SK-N-SH (cell line): ENCODE measurements at regions of chr16 and their contacts with region 1.

Region 1: DNA sequence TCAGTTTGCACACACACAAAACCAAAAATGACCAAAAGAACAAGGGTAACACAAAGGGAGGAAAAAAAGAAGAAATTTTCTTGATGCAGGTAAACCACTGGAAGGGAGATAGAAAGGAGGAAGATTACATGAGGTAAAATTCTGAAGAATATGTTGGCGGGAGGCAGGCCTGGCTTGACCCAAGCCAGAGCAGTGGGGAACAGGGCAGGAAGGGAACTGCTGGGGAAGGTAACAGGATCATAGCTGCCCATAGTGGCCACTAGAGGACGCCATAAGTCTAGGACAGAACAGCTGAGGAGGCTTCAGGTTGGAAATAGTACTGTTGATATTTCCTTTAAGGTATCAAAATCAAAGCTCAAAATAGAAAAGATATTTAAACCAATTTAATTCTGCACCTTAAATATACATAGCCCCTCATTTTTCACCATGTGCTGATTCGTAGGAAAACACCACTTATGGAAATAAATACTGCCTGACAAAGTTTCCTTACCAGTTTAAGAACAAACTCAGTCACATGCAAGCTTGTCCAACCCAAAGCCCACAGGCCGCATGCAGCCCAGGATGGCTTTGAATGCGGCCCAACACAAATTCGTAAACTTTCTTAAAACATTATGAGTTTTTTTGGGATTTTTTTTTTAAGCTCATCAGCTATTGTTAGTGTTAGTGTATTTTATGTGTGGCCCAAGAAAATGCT is 15.5 kb downstream of the VPS35 start:
- DNase-seq: peak; percentile 75
- H3K4me3 ChIP-seq: peak overlapping the region in 1 of 2 experiments; percentile 27; a peak in 1 of 4 replicates
- H3K27ac ChIP-seq: no peak overlapping the region
- H3K4me1 ChIP-seq: no peaks in the 10 kb centered on the region
- H3K27me3 ChIP-seq: no peaks in the 10 kb centered on the region
- CTCF ChIP-seq: peak; percentile 98
- EP300 ChIP-seq: no peak
- RAD21 ChIP-seq: peak; percentile 94

Region 2: GRCh38 chr16:46658925-46659324 is 14.5 kb before region 1 on chr16:
- CTCF ChIA-PET with region 1: interaction called, 24 read pairs
- POLR2A ChIA-PET with region 1: no interaction called
- DNase-seq: no peak
- H3K4me3 ChIP-seq: no peak overlapping the region
- H3K27ac ChIP-seq: no peak overlapping the region
- H3K4me1 ChIP-seq: no peaks in the 10 kb centered on the region
- H3K27me3 ChIP-seq: no peaks in the 10 kb centered on the region
- CTCF ChIP-seq: no peak
- EP300 ChIP-seq: no peak
- RAD21 ChIP-seq: no peak

Region 3: GRCh38 chr16:46689365-46690280 is 16.2 kb after region 1 on chr16 and contains the start of gene ORC6:
- CTCF ChIA-PET with region 1: interaction called, 18 read pairs
- POLR2A ChIA-PET with region 1: no interaction called
- DNase-seq: peak; percentile 96
- H3K4me3 ChIP-seq: peak within 1 kb of the TSS; percentile 69 to 83
- H3K27ac ChIP-seq: peak within 1 kb of the TSS; percentile 93 to 99
- H3K4me1 ChIP-seq: peaks cover 18% of the 10 kb centered on the region in 2 experiments
- H3K27me3 ChIP-seq: no peaks in the 10 kb centered on the region
- CTCF ChIP-seq: peak; percentile 63
- EP300 ChIP-seq: no peak
- RAD21 ChIP-seq: peak; percentile 59
- polyA plus RNA-seq, gene ORC6: 17.4 and 20.2 TPM in 2 replicates

Region 4: GRCh38 chr16:46737621-46738214 is 64.3 kb after region 1 on chr16:
- CTCF ChIA-PET with region 1: no interaction called
- POLR2A ChIA-PET with region 1: no interaction called
- DNase-seq: no peak
- H3K4me3 ChIP-seq: no peak overlapping the region
- H3K27ac ChIP-seq: no peak overlapping the region
- H3K4me1 ChIP-seq: peaks cover 0 to 2% of the 10 kb centered on the region in 2 experiments; a peak in 1 of 4 replicates
- H3K27me3 ChIP-seq: no peaks in the 10 kb centered on the region
- CTCF ChIP-seq: no peak
- EP300 ChIP-seq: no peak
- RAD21 ChIP-seq: no peak

Region 5: GRCh38 chr16:46801428-46802049 is 128.1 kb after region 1 on chr16:
- CTCF ChIA-PET with region 1: interaction called, 47 read pairs
- POLR2A ChIA-PET with region 1: no interaction called
- DNase-seq: peak; percentile 44
- H3K4me3 ChIP-seq: no peak overlapping the region; a peak in 1 of 4 replicates
- H3K27ac ChIP-seq: no peak overlapping the region
- H3K4me1 ChIP-seq: no peaks in the 10 kb centered on the region; a peak in 1 of 4 replicates
- H3K27me3 ChIP-seq: no peaks in the 10 kb centered on the region
- CTCF ChIP-seq: peak; percentile 68
- EP300 ChIP-seq: no peak
- RAD21 ChIP-seq: peak; percentile 62

Region 6: GRCh38 chr16:46808997-46809396 is 135.5 kb after region 1 on chr16:
- CTCF ChIA-PET with region 1: interaction called, 30 read pairs
- POLR2A ChIA-PET with region 1: no interaction called
- DNase-seq: no peak
- H3K4me3 ChIP-seq: no peak overlapping the region
- H3K27ac ChIP-seq: no peak overlapping the region
- H3K4me1 ChIP-seq: peaks cover 2 to 13% of the 10 kb centered on the region in 2 experiments; a peak in 2 of 4 replicates
- H3K27me3 ChIP-seq: no peaks in the 10 kb centered on the region
- CTCF ChIP-seq: no peak
- EP300 ChIP-seq: no peak
- RAD21 ChIP-seq: no peak